CD4-positive, alpha-beta T cell (primary cell): ENCODE measurements at regions of chr15 and their contacts with region 1.

Region 1: DNA sequence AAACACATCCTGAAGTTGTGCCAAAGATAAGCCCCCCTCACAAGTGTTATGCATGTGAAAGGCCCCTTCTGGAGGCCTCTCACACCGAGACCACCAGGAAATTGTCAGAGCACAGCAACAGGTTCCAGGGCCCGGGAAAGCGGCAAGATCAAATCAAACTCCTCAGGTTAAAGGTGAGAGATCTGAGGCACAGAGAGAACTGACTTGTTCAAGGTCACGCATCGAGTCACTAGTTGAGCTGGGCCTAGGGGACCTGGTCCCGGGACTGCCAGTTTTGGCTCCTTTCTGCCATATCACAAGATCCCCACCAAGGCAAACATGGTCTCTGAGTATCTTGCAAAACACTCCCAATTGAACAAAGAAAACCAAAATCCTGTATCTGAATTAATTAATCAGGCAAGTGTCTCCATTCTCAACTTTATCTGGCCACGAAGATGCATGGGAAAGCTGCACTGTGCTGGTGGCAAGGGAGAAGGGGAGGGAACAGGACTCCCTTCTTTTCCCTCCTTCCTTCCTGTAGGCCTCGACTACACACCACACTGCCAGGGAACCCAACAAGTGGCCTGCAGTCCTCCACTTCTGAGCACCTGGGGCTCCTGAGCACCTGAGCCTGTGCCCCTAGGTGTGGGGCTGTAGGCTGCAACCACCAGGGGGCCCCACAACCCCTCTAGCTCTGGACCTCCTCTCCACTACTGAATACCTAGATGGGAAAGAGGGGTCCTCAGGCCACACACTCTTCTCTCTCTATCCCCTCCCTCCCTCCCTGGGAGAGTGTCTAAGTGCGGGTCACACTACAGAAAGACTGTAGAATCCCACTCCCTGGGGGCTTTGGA is 37.3 kb downstream of the ANP32A start:
- DNase-seq: peak; percentile 56 to 84 (median 66)
- ATAC-seq: peak; percentile 89
- H3K4me3 ChIP-seq: no peak overlapping the region
- H3K4me3 Mint-ChIP-seq: no peak overlapping the region
- H3K27ac ChIP-seq: no peak overlapping the region
- H3K27ac Mint-ChIP-seq: peak overlapping the region; percentile 76
- H3K4me1 ChIP-seq: peaks cover 36% of the 10 kb centered on the region
- H3K4me1 Mint-ChIP-seq: peaks cover 30% of the 10 kb centered on the region
- H3K27me3 ChIP-seq: no peaks in the 10 kb centered on the region
- H3K27me3 Mint-ChIP-seq: no peaks in the 10 kb centered on the region
- CTCF ChIP-seq: peak; percentile 70

Region 2: GRCh38 chr15:68829068-68829467 is 45.6 kb after region 1 on chr15:
- CTCF ChIA-PET with region 1: interaction called, 19 read pairs
- POLR2A ChIA-PET with region 1: interaction called, 8 read pairs
- intact Hi-C with region 1: loop called (anchors 1 kb)
- DNase-seq: peak in 4 of 14 experiments; percentile 31 to 67 (median 56)
- ATAC-seq: peak; percentile 64
- H3K4me3 ChIP-seq: no peak overlapping the region
- H3K4me3 Mint-ChIP-seq: no peak overlapping the region
- H3K27ac ChIP-seq: no peak overlapping the region
- H3K27ac Mint-ChIP-seq: no peak overlapping the region
- H3K4me1 ChIP-seq: peaks cover 6% of the 10 kb centered on the region
- H3K4me1 Mint-ChIP-seq: peaks cover 19% of the 10 kb centered on the region
- H3K27me3 ChIP-seq: no peaks in the 10 kb centered on the region
- H3K27me3 Mint-ChIP-seq: no peaks in the 10 kb centered on the region
- CTCF ChIP-seq: peak; percentile 61